PC-9 (cell line): ENCODE measurements at regions of chr4 and their contacts with region 1.

Region 1: GRCh38 chr4:7802093-7802726 is 137.5 kb downstream of the AFAP1 start:
- DNase-seq: peak; percentile 51 to 73
- H3K4me3 ChIP-seq: no peak overlapping the region
- H3K27ac ChIP-seq: no peak overlapping the region
- H3K4me1 ChIP-seq: peaks cover 23% of the 10 kb centered on the region
- H3K27me3 ChIP-seq: no peaks in the 10 kb centered on the region
- CTCF ChIP-seq: peak; percentile 86

Region 2: DNA sequence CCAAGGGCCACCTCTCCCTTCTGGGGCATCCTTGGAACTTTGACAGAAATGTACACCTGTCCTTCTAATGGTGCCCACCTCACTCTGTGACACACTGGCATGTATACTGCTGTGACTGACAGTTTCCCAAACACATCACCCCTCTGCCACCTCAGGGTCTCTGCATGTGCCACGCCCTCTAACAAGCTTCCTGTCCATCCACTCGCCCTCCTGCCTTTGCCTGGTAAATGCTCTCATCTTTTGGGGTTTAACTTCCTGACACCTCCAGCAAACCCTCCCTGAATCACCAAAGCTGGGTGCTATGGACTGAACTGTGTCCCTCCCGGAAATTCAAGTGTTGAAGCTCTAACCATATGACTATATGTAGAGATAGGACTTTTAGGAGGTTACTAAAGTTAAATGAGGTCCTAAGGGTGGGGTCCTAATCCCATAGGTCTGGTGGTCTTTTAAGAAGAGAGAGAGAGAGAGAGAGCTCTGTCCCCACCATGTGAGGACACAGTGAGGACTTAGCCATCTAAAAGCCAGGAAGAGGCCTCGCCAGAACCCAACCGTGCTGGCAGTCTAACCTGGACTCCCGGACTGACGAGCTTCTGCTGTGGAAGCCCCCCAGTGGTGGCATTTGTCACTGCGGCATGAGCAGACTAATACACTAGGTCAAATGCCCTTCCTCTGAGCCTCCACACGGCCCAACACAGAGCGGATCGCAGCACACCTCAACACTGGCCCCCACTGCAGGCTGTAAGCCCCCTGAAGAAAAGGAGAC is 41.8 kb after region 1 on chr4:
- CTCF ChIA-PET with region 1: interaction called, 10 read pairs
- POLR2A ChIA-PET with region 1: interaction called, 4 read pairs
- intact Hi-C with region 1: loop called (anchors 2 kb)
- DNase-seq: peak in 1 of 2 experiments; percentile 67
- H3K4me3 ChIP-seq: no peak overlapping the region
- H3K27ac ChIP-seq: peak overlapping the region; percentile 96
- H3K4me1 ChIP-seq: peaks cover 46% of the 10 kb centered on the region
- H3K27me3 ChIP-seq: no peaks in the 10 kb centered on the region
- CTCF ChIP-seq: peak; percentile 63

Region 3: DNA sequence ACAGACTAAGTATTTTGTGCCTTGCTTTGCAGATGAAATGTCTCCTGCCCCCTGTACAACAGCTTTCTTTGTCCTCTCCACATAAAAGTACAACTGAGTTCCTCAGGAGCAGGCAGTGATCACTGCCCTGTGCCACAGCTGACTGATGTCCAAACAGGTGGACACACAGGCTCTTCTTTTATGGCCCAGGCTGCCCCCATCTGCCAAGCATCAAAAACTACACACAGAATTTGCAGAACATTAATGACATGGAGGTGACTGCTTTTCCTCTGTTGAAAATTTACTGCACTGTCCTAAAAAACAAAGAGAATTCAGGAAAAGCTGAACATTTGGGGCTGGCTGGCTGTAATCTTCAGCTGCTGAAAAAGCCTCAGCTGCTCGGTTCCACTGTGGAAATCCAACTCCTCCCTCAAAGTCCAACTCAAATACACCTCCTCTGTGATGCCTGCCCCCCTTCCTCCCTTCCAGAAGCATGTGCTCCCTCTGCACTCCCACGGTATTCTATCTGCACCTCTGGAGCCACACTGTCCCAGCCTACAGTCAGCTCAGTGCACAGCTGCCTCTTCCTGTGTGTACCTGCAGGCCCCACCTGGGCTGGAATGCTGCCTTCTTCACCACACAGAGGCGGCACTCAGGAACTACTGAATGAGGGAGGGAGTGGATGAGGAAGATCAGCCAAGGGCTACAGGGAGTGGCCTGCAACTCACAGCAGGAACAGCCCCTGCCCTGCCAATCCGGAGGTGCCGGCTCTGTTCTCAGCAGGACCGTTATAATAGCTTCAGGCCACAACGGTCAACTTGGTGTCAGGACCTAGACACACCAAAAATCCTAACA is 127.1 kb after region 1 on chr4:
- CTCF ChIA-PET with region 1: interaction called, 4 read pairs
- POLR2A ChIA-PET with region 1: interaction called, 11 read pairs
- intact Hi-C with region 1: loop called (anchors 1 kb)
- DNase-seq: peak; percentile 77 to 82
- H3K4me3 ChIP-seq: no peak overlapping the region
- H3K27ac ChIP-seq: no peak overlapping the region
- H3K4me1 ChIP-seq: peaks cover 31% of the 10 kb centered on the region
- H3K27me3 ChIP-seq: no peaks in the 10 kb centered on the region
- CTCF ChIP-seq: 0 out of 2 replicates have a peak, but pooled peaks have one; percentile 22

Region 4: DNA sequence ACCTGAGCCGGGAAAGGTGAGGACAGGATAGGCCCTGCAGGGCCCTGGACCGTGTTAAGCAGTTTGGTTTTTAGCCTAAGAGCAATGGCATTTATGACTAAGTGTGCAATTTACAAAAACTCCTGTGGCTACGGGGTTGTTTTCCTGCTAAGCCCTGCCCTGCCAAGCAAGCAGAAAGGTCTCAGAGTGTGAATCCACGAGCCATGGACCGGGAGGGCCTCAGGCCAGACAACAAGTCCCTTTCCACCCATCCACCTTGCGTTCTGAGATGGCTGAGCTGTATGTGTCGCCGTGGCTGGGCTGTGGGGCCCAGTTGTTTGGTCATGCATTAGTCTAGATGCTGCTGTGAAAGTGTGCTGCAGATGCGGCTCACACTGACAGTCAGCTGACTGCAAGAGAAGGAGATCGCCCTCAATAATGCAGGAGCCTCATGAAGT is 171.4 kb after region 1 on chr4:
- CTCF ChIA-PET with region 1: interaction called, 10 read pairs
- POLR2A ChIA-PET with region 1: interaction called, 4 read pairs
- intact Hi-C with region 1: loop called (anchors 2 kb)
- DNase-seq: peak; percentile 51 to 87
- H3K4me3 ChIP-seq: no peak overlapping the region
- H3K27ac ChIP-seq: peak overlapping the region; percentile 94
- H3K4me1 ChIP-seq: peaks cover 82% of the 10 kb centered on the region
- H3K27me3 ChIP-seq: no peaks in the 10 kb centered on the region
- CTCF ChIP-seq: no peak

Region 5: DNA sequence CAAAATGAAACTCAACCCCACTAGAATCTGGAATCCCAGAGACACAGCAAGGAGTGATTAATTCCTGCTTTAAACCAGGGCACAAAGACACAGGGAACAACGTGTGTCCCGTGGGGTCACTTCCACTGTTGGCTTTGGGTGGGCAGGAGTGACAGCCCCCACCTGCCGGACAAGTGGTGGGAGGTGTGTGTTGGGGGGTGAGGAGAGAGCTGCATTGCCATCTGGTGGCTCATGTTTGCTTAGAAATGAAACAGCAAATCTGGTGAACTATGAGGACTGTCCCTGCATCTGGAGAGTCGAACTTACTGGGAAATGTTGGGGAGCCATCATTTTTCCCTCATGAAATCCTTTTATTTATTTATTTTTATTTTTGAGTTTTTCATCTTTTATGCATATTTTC is 213.3 kb after region 1 on chr4:
- CTCF ChIA-PET with region 1: interaction called, 21 read pairs
- POLR2A ChIA-PET with region 1: no interaction called
- intact Hi-C with region 1: no loop called
- DNase-seq: no peak
- H3K4me3 ChIP-seq: no peak overlapping the region
- H3K27ac ChIP-seq: no peak overlapping the region
- H3K4me1 ChIP-seq: peaks cover 9% of the 10 kb centered on the region; the same call in 1 of the 2 replicates
- H3K27me3 ChIP-seq: no peaks in the 10 kb centered on the region
- CTCF ChIP-seq: peak; percentile 51

Region 6: DNA sequence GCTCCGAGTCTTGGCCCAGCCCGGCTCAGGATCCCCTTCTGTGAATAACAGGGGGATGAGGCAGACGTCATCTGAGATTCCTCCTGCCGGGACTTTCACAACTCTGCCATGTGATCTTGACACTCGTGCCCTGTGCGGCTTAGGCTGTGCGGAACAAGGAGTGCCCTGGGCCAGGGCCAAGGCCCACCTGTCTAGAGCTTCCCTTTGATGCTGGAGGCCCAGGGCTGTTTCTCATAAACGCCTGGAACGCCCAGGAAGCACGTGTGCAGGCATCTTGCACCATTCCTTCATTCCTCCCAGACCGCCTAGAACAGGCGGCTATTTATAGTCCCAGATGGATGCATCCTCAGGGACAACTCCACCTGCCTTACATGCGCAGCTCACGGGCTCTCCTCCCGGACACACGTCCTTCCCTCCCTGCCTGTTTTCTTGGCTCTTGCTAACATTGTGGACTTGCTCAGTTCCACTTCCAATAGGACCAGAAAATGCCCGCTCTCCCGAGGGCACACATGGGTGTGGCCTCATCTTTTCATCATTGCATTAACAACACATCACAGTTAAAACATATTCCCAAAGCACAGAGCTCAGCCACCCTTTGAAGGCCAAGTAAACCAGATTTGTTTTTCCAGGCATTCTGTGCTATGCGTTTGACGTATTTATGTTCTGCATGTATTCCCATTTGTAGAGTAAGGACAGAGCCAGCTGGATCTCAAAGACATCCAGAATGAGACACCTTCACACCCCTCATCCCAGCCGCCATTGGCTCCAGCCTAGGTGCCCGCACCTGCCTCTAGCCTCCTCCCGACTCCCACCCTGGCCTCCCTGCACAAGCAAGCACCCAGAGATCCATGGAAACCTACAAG is 299.2 kb after region 1 on chr4:
- CTCF ChIA-PET with region 1: no interaction called
- POLR2A ChIA-PET with region 1: no interaction called
- intact Hi-C with region 1: no loop called
- DNase-seq: no peak
- H3K4me3 ChIP-seq: no peak overlapping the region
- H3K27ac ChIP-seq: no peak overlapping the region
- H3K4me1 ChIP-seq: no peaks in the 10 kb centered on the region
- H3K27me3 ChIP-seq: peaks cover 11% of the 10 kb centered on the region; the same call in 1 of the 2 replicates
- CTCF ChIP-seq: no peak

Region 7: GRCh38 chr4:8688041-8688937 is 886.1 kb after region 1 on chr4:
- CTCF ChIA-PET with region 1: no interaction called
- POLR2A ChIA-PET with region 1: no interaction called
- intact Hi-C with region 1: no loop called
- DNase-seq: peak in 1 of 2 experiments; percentile 31
- H3K4me3 ChIP-seq: no peak overlapping the region
- H3K27ac ChIP-seq: no peak overlapping the region
- H3K4me1 ChIP-seq: no peaks in the 10 kb centered on the region
- H3K27me3 ChIP-seq: peaks cover 77% of the 10 kb centered on the region
- CTCF ChIP-seq: peak; percentile 46; the same call in 1 of the 2 replicates